ENCODE measurements at regions of chr13 and their contacts with region 1.

Region 1: DNA sequence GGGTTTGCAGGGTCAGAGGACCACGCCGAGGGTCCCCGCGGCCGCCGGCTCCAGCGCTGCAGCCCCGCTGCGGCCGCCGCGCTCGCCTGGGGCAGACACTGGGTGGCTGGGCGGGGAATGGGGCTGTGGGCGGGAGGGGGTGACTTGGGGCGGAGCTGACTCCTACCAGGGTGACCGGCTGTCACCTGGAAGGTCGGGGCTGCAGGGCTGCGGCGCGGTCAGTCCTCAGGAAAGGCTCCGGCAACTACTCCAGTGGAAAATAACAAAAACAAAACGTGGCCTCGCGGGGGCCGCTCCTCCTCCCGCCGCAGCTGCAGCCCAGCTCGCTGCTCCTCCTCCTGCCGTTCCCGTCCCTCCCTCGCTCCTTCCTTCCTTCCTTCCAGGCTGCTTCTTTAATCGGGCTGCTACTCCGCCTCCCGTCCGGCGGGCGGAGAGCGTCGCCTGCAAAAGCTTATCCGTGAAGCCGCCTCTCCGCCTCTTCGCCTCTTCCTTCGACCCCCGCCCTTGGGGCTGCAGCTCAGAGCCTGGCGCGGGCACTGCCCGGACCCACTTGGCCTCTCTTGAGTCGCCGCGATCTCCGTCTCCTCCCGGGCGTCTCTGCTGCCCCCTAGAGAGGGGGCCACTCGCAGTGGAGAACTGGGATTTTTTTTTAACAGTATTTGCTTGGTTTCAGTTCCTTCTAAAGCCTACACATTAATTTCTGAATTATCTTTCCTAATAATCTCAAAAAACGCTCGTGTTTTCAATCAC is at the start of gene TBC1D4:
- DNase-seq: peak; percentile 94
- ATAC-seq: peak; percentile 87
- total RNA-seq, gene TBC1D4: 86.8 TPM

Region 2: DNA sequence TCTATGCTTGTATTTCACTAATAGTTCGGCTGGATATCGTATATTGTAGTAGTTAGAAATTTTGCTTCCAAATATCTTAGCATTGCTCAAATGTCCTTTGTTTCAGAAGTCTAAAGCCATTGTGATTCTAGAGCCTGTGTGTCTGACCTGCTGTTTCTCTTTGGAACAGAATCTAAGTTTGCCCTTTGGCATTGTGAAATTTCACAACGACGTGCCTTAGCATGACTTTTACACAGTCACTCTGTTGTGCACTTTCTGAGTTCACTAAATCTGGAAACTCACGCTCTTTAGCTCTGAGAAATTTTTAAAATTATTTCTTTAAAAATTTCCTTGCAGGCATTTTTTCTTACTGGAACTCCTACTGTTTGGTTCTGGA is 152.5 kb before region 1 on chr13:
- intact Hi-C with region 1: loop called (anchors 5 kb)
- DNase-seq: no peak
- ATAC-seq: no peak

Region 3: GRCh38 chr13:75372517-75372916 is 109.7 kb before region 1 on chr13:
- intact Hi-C with region 1: loop called (anchors 2 kb)
- DNase-seq: no peak
- ATAC-seq: peak; percentile 53

Region 4: GRCh38 chr13:75416327-75417005 is 65.8 kb before region 1 on chr13:
- intact Hi-C with region 1: loop called (anchors 5 kb)
- DNase-seq: no peak
- ATAC-seq: no peak

Region 5: GRCh38 chr13:75437582-75438318 is 44.5 kb before region 1 on chr13:
- intact Hi-C with region 1: loop called (anchors 5 kb)
- DNase-seq: no peak
- ATAC-seq: peak; percentile 79

Region 6: DNA sequence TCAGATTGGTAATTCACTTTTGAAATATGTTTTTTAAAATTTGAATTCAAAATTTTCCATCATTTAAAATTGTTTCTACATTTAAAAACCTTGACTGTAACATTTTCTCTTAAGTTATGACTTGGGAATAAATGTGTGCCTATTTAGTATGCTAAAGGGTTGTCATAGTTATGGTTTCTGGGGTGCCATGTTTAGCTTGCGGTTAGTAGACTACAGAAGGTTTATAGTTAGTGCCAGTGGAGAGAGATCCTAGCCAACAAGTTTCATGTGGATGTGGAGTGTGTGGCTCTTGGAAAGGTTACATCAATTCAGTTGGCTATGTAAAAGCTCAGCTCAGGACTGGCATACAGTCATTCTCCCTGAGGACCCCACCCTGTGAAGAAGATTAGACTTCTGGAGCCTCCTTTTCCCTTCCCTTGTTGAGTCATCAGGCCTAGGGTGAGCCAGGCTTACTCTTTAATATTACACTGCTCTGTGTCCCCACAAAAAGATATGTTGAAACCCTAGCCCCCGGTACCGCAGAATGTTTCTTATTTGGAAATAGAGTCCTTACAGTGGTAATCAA is 174.3 kb after region 1 on chr13:
- intact Hi-C with region 1: no loop called
- DNase-seq: no peak
- ATAC-seq: no peak

Measured in Right ventricle myocardium inferior (tissue), 1 donor.